Activated T-helper 2 cell treated with anti-CD3 and anti-CD28 coated beads, Interferon-gamma antibody, Interleukin-2, Interleukin-4, amounts not matched to agents 10 μg/mL and 5 μg/mL and 100 μg/mL, durations not matched to agents 14 hours and 24 hours and 36 hours (primary cell): ENCODE measurements at regions of chrX and their contacts with region 1.

Region 1: GRCh38 chrX:107654872-107655761 is 26.8 kb downstream of the PRPS1 start:
- DNase-seq: peak; percentile 46
- H3K4me3 Mint-ChIP-seq: no peak overlapping the region
- H3K27ac Mint-ChIP-seq: no peak overlapping the region
- H3K4me1 Mint-ChIP-seq: peaks cover 5% of the 10 kb centered on the region
- H3K27me3 Mint-ChIP-seq: no peaks in the 10 kb centered on the region

Region 2: DNA sequence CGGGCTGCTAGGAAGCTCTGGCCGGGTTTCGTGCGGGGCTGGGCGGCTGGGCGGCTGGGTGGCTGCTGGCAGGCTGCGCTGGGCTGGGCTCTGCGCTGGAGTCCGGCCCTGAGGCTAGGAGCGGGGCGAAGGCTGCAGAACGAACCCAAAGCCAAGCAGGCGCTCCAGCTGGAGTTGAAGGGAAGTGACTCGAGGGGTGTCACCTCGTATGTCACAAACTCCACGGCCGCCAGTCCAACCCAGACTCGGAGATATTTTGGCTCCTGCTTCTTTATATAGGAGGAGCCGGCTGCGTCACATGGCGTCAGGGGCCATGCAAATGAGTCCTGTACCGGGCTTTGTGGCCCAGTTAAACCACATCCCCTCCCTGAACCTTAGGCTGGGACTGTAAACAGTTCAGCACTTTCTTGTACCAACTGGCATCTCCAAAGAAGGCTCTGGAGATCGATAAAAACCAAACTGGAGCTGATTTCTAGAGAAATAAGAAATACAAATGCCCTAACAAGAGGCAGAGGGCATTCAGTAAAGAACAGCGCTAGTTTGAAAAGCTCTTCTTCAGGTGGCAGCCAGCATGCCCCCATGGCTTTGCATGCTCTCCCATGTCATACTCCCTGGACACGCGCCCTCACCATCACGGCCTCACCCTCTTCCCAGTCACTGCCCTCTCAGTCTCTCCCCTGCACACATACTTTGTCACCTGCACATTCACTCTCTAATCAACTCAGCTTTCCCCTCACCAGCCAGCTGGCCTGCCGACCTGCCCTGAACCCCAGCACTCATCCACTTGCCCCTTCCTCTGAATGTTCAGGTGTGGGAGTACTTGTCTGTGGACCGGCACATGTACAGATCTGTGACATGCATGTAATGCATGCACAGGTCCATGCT is 61.9 kb after region 1 on chrX:
- intact Hi-C with region 1: loop called (anchors 1 kb)
- DNase-seq: peak; percentile 85
- H3K4me3 Mint-ChIP-seq: peak overlapping the region; percentile 93
- H3K27ac Mint-ChIP-seq: peak overlapping the region; percentile 87
- H3K4me1 Mint-ChIP-seq: peaks cover 39% of the 10 kb centered on the region
- H3K27me3 Mint-ChIP-seq: no peaks in the 10 kb centered on the region

Region 3: GRCh38 chrX:107731831-107732502 is 76.8 kb after region 1 on chrX:
- intact Hi-C with region 1: loop called (anchors 5 kb)
- DNase-seq: no peak
- H3K4me3 Mint-ChIP-seq: no peak overlapping the region
- H3K27ac Mint-ChIP-seq: no peak overlapping the region
- H3K4me1 Mint-ChIP-seq: no peaks in the 10 kb centered on the region
- H3K27me3 Mint-ChIP-seq: peaks cover 2% of the 10 kb centered on the region

Region 4: GRCh38 chrX:107894038-107894437 is 238.9 kb after region 1 on chrX:
- intact Hi-C with region 1: loop called (anchors 1 kb)
- DNase-seq: no peak
- H3K4me3 Mint-ChIP-seq: no peak overlapping the region
- H3K27ac Mint-ChIP-seq: no peak overlapping the region
- H3K4me1 Mint-ChIP-seq: no peaks in the 10 kb centered on the region
- H3K27me3 Mint-ChIP-seq: peaks cover 1% of the 10 kb centered on the region

Region 5: GRCh38 chrX:108070891-108071290 is 415.8 kb after region 1 on chrX:
- intact Hi-C with region 1: loop called (anchors 5 kb)
- DNase-seq: no peak
- H3K4me3 Mint-ChIP-seq: no peak overlapping the region
- H3K27ac Mint-ChIP-seq: no peak overlapping the region
- H3K4me1 Mint-ChIP-seq: no peaks in the 10 kb centered on the region
- H3K27me3 Mint-ChIP-seq: peaks cover 14% of the 10 kb centered on the region